B cell (primary cell): ENCODE measurements at regions of chr3 and their contacts with region 1.

Region 1: DNA sequence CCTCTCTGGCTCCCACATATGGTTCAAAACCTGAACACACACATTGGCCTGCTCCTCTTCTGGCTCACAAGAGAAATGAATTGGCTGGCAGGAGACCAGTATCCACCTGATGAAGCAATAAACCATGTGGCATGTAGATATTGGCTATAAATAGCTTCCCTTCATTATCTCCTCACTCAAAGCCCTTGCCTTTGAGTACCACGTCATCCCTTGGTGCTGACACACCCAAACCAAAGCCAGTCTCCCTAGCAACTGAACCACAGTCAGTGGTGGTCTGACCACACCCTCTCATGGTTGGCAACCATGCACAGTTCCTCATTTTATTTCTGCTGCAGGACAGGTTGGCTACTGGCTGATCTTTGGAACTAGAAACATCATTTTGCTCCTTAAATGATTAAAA is 98.8 kb downstream of the ZNF621 start:
- DNase-seq: peak; percentile 96
- ATAC-seq: peak; percentile 92
- H3K4me3 ChIP-seq: peak overlapping the region; percentile 68 to 89 (median 84)
- H3K4me3 Mint-ChIP-seq: no peak overlapping the region
- H3K27ac ChIP-seq: peak overlapping the region; percentile 96 to 98
- H3K27ac Mint-ChIP-seq: no peak overlapping the region
- H3K4me1 ChIP-seq: peaks cover 33 to 48% of the 10 kb centered on the region in 2 donors
- H3K4me1 Mint-ChIP-seq: peaks cover 14% of the 10 kb centered on the region
- H3K27me3 ChIP-seq: no peaks in the 10 kb centered on the region
- H3K27me3 Mint-ChIP-seq: no peaks in the 10 kb centered on the region
- CTCF ChIP-seq: no peak

Region 2: DNA sequence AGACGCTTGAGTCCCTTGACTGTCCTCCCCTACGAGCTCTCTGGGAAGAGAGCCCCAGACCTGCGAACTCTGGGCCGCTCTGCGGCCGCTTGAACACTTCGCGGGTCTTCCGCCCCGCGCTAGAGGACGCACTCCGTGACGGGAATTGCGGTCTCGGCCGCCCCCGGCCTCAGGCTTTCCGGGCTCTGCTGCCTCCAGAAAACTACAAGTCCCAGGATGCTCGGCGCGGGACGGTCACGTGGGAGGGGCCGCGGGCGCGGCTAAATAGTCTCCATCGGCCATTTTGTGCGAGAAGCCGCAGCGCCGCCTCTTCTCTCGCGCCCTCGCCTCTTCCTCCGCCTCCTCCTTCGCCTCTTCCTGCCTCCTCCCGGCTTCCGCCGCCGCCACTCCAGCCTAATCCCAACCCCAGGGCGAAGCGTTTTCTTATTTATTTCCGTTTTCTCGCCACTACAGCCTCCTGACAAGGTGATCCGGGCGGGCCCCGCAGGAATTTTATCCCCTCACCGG is 314.1 kb before region 1 on chr3 and contains the start of gene EIF1B:
- CTCF ChIA-PET with region 1: no interaction called
- POLR2A ChIA-PET with region 1: no interaction called
- intact Hi-C with region 1: loop called (anchors 1 kb)
- DNase-seq: peak; percentile 98
- ATAC-seq: peak; percentile 87
- H3K4me3 ChIP-seq: peak within 1 kb of the TSS; percentile 77 to 98 (median 90)
- H3K4me3 Mint-ChIP-seq: peak within 1 kb of the TSS; percentile 96
- H3K27ac ChIP-seq: peak within 1 kb of the TSS; percentile 96 to 97
- H3K27ac Mint-ChIP-seq: peak within 1 kb of the TSS; percentile 99
- H3K4me1 ChIP-seq: peaks cover 15 to 20% of the 10 kb centered on the region in 2 donors
- H3K4me1 Mint-ChIP-seq: peaks cover 34% of the 10 kb centered on the region
- H3K27me3 ChIP-seq: no peaks in the 10 kb centered on the region
- H3K27me3 Mint-ChIP-seq: no peaks in the 10 kb centered on the region
- CTCF ChIP-seq: peak; percentile 90
- total RNA-seq, gene EIF1B: 70.6 and 78.1 TPM in 2 replicates

Region 3: DNA sequence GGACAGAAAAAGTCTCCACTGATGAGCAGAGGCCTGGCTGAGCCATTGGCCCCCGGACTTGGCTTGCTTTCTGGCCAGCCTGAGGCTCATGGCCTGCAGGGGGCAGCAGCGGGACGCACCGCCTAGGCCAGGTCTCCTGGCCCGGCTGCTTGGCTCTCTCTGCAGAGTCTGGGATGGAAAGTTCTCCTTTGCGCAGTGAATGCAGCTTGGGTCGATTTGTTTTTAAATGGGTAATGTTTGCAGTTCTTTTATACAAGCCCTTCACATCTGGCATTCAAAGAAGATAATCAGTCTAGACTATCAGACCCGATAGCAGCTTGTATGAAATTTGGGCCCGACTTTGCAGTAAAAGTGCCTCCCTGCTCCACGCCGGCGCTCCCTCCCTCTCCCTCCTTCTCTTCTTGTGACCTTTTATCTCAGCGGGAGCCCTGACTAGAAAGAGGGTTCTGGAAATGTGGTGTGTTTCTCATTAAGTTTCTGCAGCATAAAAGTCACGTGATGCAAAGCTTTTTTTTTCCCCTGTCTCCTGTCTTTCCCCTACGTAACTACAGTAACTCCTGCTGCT is 38.9 kb before region 1 on chr3:
- CTCF ChIA-PET with region 1: interaction called, 6 read pairs
- POLR2A ChIA-PET with region 1: no interaction called
- intact Hi-C with region 1: loop called (anchors 2 kb)
- DNase-seq: peak; percentile 85
- ATAC-seq: peak; percentile 89
- H3K4me3 ChIP-seq: no peak overlapping the region
- H3K4me3 Mint-ChIP-seq: no peak overlapping the region
- H3K27ac ChIP-seq: no peak overlapping the region
- H3K27ac Mint-ChIP-seq: no peak overlapping the region
- H3K4me1 ChIP-seq: peaks cover 0 to 3% of the 10 kb centered on the region in 2 donors
- H3K4me1 Mint-ChIP-seq: peaks cover 14% of the 10 kb centered on the region
- H3K27me3 ChIP-seq: no peaks in the 10 kb centered on the region
- H3K27me3 Mint-ChIP-seq: peaks cover 7% of the 10 kb centered on the region
- CTCF ChIP-seq: peak; percentile 94

Region 4: GRCh38 chr3:40713795-40714194 is 90.2 kb after region 1 on chr3:
- CTCF ChIA-PET with region 1: interaction called, 4 read pairs
- POLR2A ChIA-PET with region 1: no interaction called
- intact Hi-C with region 1: loop called (anchors 1 kb)
- DNase-seq: peak; percentile 68
- ATAC-seq: peak; percentile 70
- H3K4me3 ChIP-seq: peak overlapping the region in 1 of 5 experiments; percentile 8
- H3K4me3 Mint-ChIP-seq: peak overlapping the region; percentile 55
- H3K27ac ChIP-seq: peak overlapping the region; percentile 28 to 42
- H3K27ac Mint-ChIP-seq: peak overlapping the region; percentile 66
- H3K4me1 ChIP-seq: peaks cover 44 to 49% of the 10 kb centered on the region in 2 donors
- H3K4me1 Mint-ChIP-seq: peaks cover 53% of the 10 kb centered on the region
- H3K27me3 ChIP-seq: no peaks in the 10 kb centered on the region
- H3K27me3 Mint-ChIP-seq: no peaks in the 10 kb centered on the region
- CTCF ChIP-seq: no peak

Region 5: DNA sequence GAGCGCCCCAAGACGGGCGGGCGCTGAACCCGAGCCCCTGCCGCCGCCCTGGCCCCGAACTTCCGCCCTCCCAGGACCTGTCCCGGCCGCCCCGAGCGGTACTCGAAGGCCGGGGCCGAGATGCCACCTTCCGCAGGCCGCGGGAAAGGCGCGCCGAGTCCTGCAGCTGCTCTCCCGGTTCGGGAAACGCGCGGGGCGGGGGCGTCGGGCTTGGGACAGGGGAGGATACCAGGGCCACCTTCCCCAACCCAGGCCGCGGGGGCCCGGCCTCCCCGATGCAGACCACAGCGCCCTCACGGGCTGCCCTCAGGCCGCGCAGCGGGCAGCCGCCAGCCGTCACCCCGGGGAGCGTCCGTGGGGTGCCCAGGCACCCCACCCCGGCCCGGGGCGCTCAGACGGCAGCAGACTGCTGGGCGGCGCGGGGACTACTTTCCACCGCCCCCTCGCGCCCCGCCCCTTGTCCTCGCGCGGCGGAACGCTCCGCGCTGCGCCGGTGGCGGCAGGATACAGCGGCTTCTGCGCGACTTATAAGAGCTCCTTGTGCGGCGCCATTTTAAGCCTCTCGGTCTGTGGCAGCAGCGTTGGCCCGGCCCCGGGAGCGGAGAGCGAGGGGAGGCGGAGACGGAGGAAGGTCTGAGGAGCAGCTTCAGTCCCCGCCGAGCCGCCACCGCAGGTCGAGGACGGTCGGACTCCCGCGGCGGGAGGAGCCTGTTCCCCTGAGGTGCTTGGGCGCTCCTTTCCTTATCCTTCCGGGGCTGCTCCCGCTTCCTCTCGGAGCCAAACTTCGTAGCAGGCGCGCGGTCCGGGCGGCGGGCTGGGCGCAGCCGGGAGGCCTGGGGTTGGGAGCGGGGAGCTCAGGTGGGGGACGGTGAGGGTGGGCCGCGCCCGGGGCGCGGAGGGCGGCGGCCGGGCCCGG is 575.6 kb after region 1 on chr3 and contains the start of gene CTNNB1:
- CTCF ChIA-PET with region 1: no interaction called
- POLR2A ChIA-PET with region 1: interaction called, 3 read pairs
- intact Hi-C with region 1: loop called (anchors 1 kb)
- DNase-seq: peak; percentile 97
- ATAC-seq: peak; percentile 82
- H3K4me3 ChIP-seq: peak within 1 kb of the TSS; percentile 91 to 98 (median 96)
- H3K4me3 Mint-ChIP-seq: peak within 1 kb of the TSS; percentile 96
- H3K27ac ChIP-seq: peak within 1 kb of the TSS; percentile 94 to 97
- H3K27ac Mint-ChIP-seq: peak within 1 kb of the TSS; percentile 95
- H3K4me1 ChIP-seq: peaks cover 38 to 43% of the 10 kb centered on the region in 2 donors
- H3K4me1 Mint-ChIP-seq: peaks cover 45% of the 10 kb centered on the region
- H3K27me3 ChIP-seq: peaks cover 0 to 4% (median 0%) of the 10 kb centered on the region in 4 experiments
- H3K27me3 Mint-ChIP-seq: peaks cover 8% of the 10 kb centered on the region
- CTCF ChIP-seq: no peak
- total RNA-seq, gene CTNNB1: 178 and 202 TPM in 2 replicates

Region 6: DNA sequence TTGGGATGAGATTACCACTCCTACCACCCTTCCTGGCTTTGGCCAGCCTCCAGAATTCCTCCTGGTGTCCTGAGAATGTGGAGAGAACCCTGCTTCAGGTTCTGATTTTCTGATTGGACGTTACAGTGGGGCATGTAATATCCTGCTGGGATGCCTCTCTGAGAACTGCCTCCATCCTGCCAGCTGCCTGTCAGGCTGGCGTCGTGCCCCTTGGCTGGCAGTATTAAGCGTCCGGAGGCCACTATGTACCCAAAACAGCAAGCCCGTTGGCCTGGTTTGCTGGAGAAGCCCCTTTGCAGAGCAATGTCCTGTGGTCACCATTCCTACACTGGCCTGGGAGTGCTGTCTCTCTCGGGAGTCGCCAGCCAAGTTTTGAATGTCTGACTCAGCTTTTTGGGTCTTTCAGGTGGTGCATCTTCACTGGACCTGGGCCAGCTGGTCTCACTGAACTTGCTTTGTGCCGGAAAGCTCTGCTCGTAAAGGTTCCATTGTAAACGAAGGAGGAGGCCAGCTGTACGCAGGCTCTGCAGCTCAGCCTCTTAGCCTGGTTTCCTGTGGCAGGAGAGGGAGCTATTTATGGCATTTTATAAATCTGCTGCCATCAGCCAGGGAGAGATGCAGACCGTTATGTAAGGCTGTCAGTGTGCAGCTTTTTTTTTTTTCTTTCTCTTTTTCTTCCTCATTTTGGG is 1448.5 kb after region 1 on chr3:
- CTCF ChIA-PET with region 1: no interaction called
- POLR2A ChIA-PET with region 1: no interaction called
- intact Hi-C with region 1: loop called (anchors 1 kb)
- DNase-seq: peak; percentile 55
- ATAC-seq: peak; percentile 14
- H3K4me3 ChIP-seq: peak overlapping the region in 4 of 5 experiments; percentile 12 to 36 (median 30)
- H3K4me3 Mint-ChIP-seq: peak overlapping the region; percentile 78
- H3K27ac ChIP-seq: peak overlapping the region; percentile 51 to 80
- H3K27ac Mint-ChIP-seq: peak overlapping the region; percentile 82
- H3K4me1 ChIP-seq: peaks cover 66 to 79% of the 10 kb centered on the region in 2 donors
- H3K4me1 Mint-ChIP-seq: peaks cover 82% of the 10 kb centered on the region
- H3K27me3 ChIP-seq: no peaks in the 10 kb centered on the region
- H3K27me3 Mint-ChIP-seq: no peaks in the 10 kb centered on the region
- CTCF ChIP-seq: no peak